Psoas muscle (tissue), 8 donors: ENCODE measurements at regions of chr10 and their contacts with region 1.

Region 1: DNA sequence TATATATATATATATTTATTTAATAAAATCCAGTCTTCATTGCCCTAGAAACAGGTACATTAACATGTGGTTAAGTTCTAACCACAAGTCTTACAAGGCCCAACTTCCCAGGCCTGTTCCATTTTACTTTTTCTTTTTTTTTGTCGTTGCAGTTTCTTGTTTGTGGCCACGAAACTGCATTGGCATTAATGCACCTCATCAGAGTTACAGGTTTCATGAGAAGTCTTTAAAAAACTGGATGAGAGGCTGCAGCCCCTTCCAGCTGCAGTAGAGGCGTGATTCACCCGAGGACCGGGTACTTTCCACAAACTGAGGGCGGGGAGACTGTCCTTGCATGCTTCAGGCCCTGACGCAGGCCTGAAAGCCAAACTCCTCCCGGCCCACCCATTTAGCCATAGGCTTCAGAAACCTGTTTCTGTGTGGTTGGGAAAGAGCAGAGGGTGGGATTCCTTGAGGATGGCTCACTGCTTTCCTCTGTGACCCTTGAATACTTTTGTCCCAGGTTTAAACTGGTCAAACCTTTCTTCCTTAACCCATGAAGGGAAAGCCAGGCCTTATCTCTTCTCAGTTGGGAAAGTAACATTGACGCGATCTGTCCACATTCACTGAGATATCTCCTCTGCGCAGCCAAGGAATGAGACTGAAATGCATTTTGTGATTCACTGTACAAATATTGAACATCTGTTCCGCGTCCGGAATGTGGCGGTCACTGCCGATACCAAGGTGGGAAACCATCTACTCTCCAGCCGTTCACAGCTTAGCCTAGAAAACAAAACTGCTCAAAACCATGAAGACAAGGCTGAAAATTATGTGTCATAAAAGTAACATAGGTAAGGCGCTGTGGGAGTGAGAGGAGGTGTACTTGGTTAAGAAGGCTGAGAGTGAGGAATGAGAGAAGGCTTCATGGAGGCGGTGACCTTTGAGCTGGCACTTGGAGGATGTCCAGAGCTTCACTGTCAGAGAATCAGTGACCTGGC is 311.7 kb downstream of the GATA3 start:
- DNase-seq: no peak
- ATAC-seq: no peak
- H3K4me3 ChIP-seq: no peak overlapping the region
- H3K27ac ChIP-seq: no peak overlapping the region
- H3K4me1 ChIP-seq: no peaks in the 10 kb centered on the region
- H3K27me3 ChIP-seq: no peaks in the 10 kb centered on the region
- CTCF ChIP-seq: no peak

Region 2: DNA sequence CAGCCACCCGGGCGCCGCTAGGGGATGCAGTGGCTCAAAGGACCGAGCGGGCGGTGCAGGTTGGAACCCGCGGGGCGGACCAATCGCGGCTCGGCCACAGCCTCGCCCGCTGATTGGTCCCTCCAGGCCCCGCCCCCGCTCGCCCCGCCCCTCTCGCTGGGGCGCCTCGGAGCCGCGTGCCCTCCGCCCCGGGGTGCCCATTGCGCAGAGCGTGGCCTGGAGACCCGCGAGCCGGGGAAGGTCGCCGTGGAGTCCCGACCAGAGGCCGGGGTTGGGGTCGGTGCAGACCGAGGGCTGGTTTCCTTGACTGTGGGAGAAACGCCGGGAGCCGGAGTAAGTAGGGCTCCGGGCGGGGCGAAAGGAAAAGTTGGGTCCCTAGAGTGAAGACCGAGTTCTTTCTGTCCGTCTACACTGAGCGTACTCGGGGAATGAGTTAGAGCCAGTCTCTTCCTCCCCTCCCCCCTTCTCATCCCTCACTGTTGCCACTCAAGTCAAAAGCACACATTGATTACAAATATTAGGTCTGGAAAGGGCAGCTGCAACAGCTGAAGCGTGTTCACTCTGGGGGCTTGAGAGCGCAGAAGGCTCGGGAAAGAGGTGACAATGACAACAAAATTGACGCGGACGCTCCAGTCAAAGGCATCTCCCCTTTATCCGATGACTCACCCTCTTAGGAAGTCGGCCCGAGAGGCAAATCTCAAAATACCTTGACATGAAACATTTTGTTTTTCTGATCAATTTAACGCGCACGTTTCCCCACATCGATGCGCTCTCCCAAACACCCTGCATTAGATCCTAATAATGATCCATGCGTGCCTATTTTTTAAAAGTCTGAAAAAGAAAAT is 312.6 kb before region 1 on chr10:
- intact Hi-C with region 1: no loop called
- DNase-seq: peak; percentile 79 to 84
- ATAC-seq: peak; percentile 77 to 87 (median 84)
- H3K4me3 ChIP-seq: peak overlapping the region; percentile 63
- H3K27ac ChIP-seq: no peak overlapping the region
- H3K4me1 ChIP-seq: peaks cover 37% of the 10 kb centered on the region
- H3K27me3 ChIP-seq: peaks cover 0 to 100% (median 52%) of the 10 kb centered on the region in 3 donors
- CTCF ChIP-seq: peak; percentile 61

Region 3: GRCh38 chr10:8279598-8279997 is 86.6 kb before region 1 on chr10:
- intact Hi-C with region 1: loop called in 1 of 2 experiments (anchors 10 kb)
- DNase-seq: no peak
- ATAC-seq: no peak
- H3K4me3 ChIP-seq: no peak overlapping the region
- H3K27ac ChIP-seq: no peak overlapping the region
- H3K4me1 ChIP-seq: no peaks in the 10 kb centered on the region
- H3K27me3 ChIP-seq: no peaks in the 10 kb centered on the region
- CTCF ChIP-seq: no peak